Activated CD8-positive, alpha-beta T cell treated with anti-CD3 and anti-CD28 coated beads for 36 hours (primary cell): ENCODE measurements at regions of chr2 and their contacts with region 1.

Region 1: GRCh38 chr2:42238644-42239288 is 69.6 kb downstream of the EML4 start:
- DNase-seq: peak; percentile 62
- ATAC-seq: peak; percentile 94
- H3K4me3 Mint-ChIP-seq: no peak overlapping the region
- H3K27ac Mint-ChIP-seq: no peak overlapping the region
- H3K4me1 Mint-ChIP-seq: peaks cover 71% of the 10 kb centered on the region
- H3K27me3 Mint-ChIP-seq: no peaks in the 10 kb centered on the region
- CTCF ChIP-seq: peak; percentile 54

Region 2: DNA sequence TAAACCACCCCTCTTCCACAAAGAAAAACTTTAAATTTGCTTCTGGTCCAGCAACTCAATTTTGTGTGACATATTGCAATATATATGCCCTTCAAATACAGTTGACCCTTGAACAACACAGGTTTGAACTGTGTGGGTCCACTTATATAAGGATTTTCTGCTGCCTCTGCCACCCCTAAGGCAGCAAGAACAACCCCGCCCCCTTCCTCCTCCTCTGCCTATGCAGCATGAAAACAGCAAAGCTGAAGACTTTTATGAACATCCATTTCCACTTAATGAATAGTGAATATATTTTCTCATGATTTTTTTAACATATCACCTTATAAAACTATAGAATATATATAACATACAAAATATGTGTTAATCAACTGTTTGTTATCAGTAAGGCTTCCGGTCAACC is 11.3 kb before region 1 on chr2:
- CTCF ChIA-PET with region 1: interaction called, 12 read pairs
- POLR2A ChIA-PET with region 1: no interaction called
- intact Hi-C with region 1: no loop called
- DNase-seq: peak; percentile 9
- ATAC-seq: no peak
- H3K4me3 Mint-ChIP-seq: no peak overlapping the region
- H3K27ac Mint-ChIP-seq: peak overlapping the region; percentile 60
- H3K4me1 Mint-ChIP-seq: peaks cover 66% of the 10 kb centered on the region
- H3K27me3 Mint-ChIP-seq: no peaks in the 10 kb centered on the region
- CTCF ChIP-seq: no peak

Region 3: GRCh38 chr2:42267530-42267929 is 28.8 kb after region 1 on chr2:
- CTCF ChIA-PET with region 1: no interaction called
- POLR2A ChIA-PET with region 1: no interaction called
- intact Hi-C with region 1: no loop called
- DNase-seq: no peak
- ATAC-seq: peak; percentile 47
- H3K4me3 Mint-ChIP-seq: no peak overlapping the region
- H3K27ac Mint-ChIP-seq: peak overlapping the region; percentile 72
- H3K4me1 Mint-ChIP-seq: peaks cover 14% of the 10 kb centered on the region
- H3K27me3 Mint-ChIP-seq: no peaks in the 10 kb centered on the region
- CTCF ChIP-seq: no peak

Region 4: GRCh38 chr2:42284019-42284418 is 45.3 kb after region 1 on chr2:
- CTCF ChIA-PET with region 1: no interaction called
- POLR2A ChIA-PET with region 1: no interaction called
- intact Hi-C with region 1: no loop called
- DNase-seq: no peak
- ATAC-seq: no peak
- H3K4me3 Mint-ChIP-seq: no peak overlapping the region
- H3K27ac Mint-ChIP-seq: no peak overlapping the region
- H3K4me1 Mint-ChIP-seq: peaks cover 21% of the 10 kb centered on the region
- H3K27me3 Mint-ChIP-seq: no peaks in the 10 kb centered on the region
- CTCF ChIP-seq: no peak

Region 5: DNA sequence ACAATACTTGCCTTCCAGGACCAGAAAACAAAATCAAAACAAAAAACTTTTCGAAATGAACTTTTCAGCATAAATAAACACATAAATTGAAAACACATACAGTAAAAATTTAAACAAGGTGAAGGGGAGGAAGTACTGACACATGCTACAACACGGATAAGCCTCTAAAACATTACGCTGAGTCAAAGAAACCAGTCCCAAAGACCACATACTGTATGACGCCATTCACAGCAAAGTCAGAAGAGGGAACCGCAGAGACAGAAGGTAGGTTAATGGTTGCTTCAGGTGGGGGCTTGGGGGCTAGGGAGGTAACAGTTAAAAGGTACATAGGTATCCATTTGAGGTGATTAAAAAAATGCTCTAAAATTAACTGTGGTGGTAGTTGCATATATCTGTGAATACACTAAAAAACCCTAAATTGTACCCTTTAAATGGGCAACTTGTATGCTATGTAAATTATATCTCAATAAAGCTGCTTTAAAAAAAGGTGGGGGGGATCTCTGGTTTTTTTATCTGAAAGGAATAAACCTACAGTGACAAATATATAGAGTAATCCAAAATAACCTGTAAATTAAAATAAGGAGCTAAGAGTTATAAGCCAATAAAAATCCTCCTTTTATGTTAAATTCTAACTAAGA is 115.1 kb after region 1 on chr2:
- CTCF ChIA-PET with region 1: no interaction called
- POLR2A ChIA-PET with region 1: no interaction called
- intact Hi-C with region 1: no loop called
- DNase-seq: peak; percentile 31
- ATAC-seq: peak; percentile 83
- H3K4me3 Mint-ChIP-seq: no peak overlapping the region
- H3K27ac Mint-ChIP-seq: peak overlapping the region; percentile 76
- H3K4me1 Mint-ChIP-seq: peaks cover 53% of the 10 kb centered on the region
- H3K27me3 Mint-ChIP-seq: no peaks in the 10 kb centered on the region
- CTCF ChIP-seq: no peak